ENCODE measurements at regions of chr17 and their contacts with region 1.

Region 1: GRCh38 chr17:44218344-44219107 is 949 bp downstream of the UBTF start:
- DNase-seq: peak; percentile 88
- H3K4me3 Mint-ChIP-seq: peak overlapping the region; percentile 88
- H3K27ac Mint-ChIP-seq: peak overlapping the region; percentile 88
- H3K4me1 Mint-ChIP-seq: peaks cover 48% of the 10 kb centered on the region
- H3K27me3 Mint-ChIP-seq: peaks cover 7% of the 10 kb centered on the region

Region 2: GRCh38 chr17:44199553-44200477 is 18.7 kb before region 1 on chr17 and contains the start of gene ATXN7L3:
- CTCF ChIA-PET with region 1: interaction called, 23 read pairs
- DNase-seq: peak; percentile 100
- H3K4me3 Mint-ChIP-seq: peak within 1 kb of the TSS; percentile 93
- H3K27ac Mint-ChIP-seq: peak within 1 kb of the TSS; percentile 99
- H3K4me1 Mint-ChIP-seq: peaks cover 57% of the 10 kb centered on the region
- H3K27me3 Mint-ChIP-seq: no peaks in the 10 kb centered on the region

Region 3: DNA sequence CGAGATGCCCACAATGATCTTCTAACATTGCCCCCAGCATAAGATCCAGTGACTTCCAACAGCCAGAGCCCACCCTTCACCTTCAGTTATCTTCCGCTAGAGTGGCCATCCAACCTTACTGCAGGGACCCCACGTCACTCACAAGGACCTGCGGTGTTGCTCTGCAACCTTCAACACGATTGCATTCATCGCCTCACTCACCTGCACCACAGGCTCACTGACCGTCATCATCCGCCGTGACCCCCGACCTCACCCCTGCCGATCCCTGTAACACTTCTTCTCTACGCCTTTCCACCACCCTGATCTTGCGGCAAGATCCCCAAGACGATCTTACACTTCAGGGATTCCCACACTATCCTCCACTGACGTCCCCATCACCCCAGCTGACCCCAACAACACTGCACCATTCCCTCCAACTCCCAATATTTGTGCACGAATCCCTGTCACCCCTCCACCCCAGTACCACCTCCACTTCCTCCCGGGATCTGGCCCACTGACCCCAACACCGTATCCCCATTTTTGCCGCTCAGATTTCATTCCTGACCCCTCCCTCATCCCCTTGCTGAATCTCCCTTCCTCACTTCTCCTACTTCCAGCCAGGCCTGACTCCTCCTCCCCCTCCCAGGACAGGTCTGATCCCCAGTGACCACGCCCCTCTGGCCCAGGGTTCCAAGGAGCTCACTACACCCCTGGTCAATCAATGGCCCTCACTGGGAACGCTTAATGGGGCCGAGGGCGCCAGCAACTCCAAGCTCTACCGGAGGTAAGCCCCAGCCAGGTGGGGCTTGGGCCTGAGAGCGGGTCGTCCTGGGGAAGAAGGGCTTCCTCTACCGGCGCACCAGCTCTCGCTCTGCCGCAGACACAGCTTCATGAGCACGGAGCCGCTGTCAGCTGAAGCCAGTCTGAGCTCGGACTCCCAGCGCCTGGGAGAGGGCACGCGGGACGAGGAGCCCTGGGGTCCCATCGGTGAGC is 97.5 kb after region 1 on chr17:
- CTCF ChIA-PET with region 1: interaction called, 11 read pairs
- DNase-seq: no peak
- H3K4me3 Mint-ChIP-seq: peak overlapping the region; percentile 55
- H3K27ac Mint-ChIP-seq: no peak overlapping the region
- H3K4me1 Mint-ChIP-seq: peaks cover 13% of the 10 kb centered on the region
- H3K27me3 Mint-ChIP-seq: peaks cover 70% of the 10 kb centered on the region

Measured in activated naive CD4-positive, alpha-beta T cell treated with anti-CD3 and anti-CD28 coated beads, Interleukin-2, amount 10 ng/mL, durations not matched to agents 7 days and 5 days (primary cell).